OCI-LY7 (cell line): ENCODE measurements at regions of chrX and their contacts with region 1.

Region 1: GRCh38 chrX:51860679-51861078 is 32.7 kb upstream of the MAGED1 start:
- DNase-seq: peak; percentile 33
- H3K4me3 ChIP-seq: no peak overlapping the region
- H3K27ac ChIP-seq: no peak overlapping the region
- H3K4me1 ChIP-seq: no peaks in the 10 kb centered on the region
- CTCF ChIP-seq: peak; percentile 71

Region 2: GRCh38 chrX:51406688-51407461 is 453.8 kb before region 1 on chrX:
- CTCF ChIA-PET with region 1: no interaction called
- POLR2A ChIA-PET with region 1: no interaction called
- intact Hi-C with region 1: no loop called
- DNase-seq: no peak
- H3K4me3 ChIP-seq: no peak overlapping the region
- H3K27ac ChIP-seq: no peak overlapping the region
- H3K4me1 ChIP-seq: peaks cover 14% of the 10 kb centered on the region
- CTCF ChIP-seq: no peak

Region 3: GRCh38 chrX:51494409-51494808 is 366.3 kb before region 1 on chrX:
- CTCF ChIA-PET with region 1: no interaction called
- POLR2A ChIA-PET with region 1: no interaction called
- intact Hi-C with region 1: no loop called
- DNase-seq: peak; percentile 25
- H3K4me3 ChIP-seq: peak overlapping the region; percentile 76
- H3K27ac ChIP-seq: no peak overlapping the region
- H3K4me1 ChIP-seq: peaks cover 31% of the 10 kb centered on the region
- CTCF ChIP-seq: peak; percentile 71

Region 4: DNA sequence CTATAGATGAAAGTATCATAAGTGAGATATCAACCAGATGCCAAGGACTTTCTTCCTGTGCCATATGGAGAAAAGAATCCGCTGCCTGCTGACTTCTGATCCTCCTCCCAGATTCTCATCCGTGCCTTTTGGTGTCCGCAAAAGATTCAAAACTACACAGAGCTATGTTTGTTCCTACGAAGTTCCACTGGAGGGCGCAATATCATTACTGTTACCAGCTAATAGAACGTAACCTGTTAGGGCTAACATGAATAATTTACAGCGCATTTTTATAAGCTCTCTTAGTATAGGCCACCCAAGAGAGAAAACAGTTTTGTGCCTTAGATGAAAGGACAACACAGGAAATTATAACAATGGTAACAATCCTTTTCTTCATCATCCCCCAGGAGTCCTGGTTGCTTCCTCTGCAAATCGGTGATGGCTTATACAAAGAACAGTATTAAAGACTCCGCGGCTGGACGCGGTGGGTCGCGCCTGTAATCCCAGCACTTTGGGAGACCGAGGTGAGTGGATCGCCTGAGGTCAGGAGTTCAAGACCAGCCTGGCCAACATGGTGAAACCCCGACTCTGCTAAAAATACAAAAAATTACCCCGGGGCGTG is 219.2 kb before region 1 on chrX:
- CTCF ChIA-PET with region 1: no interaction called
- POLR2A ChIA-PET with region 1: no interaction called
- intact Hi-C with region 1: loop called (anchors 1 kb)
- DNase-seq: peak; percentile 47
- H3K4me3 ChIP-seq: no peak overlapping the region
- H3K27ac ChIP-seq: no peak overlapping the region
- H3K4me1 ChIP-seq: no peaks in the 10 kb centered on the region
- CTCF ChIP-seq: peak; percentile 78

Region 5: DNA sequence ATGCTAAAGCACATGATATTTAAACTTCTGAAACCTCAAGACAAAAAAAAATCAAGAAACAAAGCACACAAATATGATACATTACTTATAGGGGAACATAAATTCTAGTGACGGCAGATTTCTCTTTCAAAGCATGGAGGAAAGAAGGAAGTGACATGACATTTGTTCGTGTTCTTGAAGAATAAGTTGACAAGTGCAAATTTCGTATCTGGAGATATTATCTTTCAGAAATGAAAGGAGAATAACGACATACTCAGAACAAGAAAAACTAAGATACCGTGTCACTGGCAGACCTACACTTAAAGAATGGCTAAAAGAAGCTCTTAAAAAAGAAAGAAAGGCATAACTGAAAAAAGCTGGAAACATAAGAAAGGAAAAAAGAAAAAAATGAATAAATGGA is 194.7 kb before region 1 on chrX:
- CTCF ChIA-PET with region 1: no interaction called
- POLR2A ChIA-PET with region 1: no interaction called
- intact Hi-C with region 1: no loop called
- DNase-seq: no peak
- H3K4me3 ChIP-seq: no peak overlapping the region
- H3K27ac ChIP-seq: no peak overlapping the region
- H3K4me1 ChIP-seq: no peaks in the 10 kb centered on the region
- CTCF ChIP-seq: no peak

Region 6: GRCh38 chrX:51902510-51903050 is 41.9 kb after region 1 on chrX:
- CTCF ChIA-PET with region 1: no interaction called
- POLR2A ChIA-PET with region 1: no interaction called
- intact Hi-C with region 1: no loop called
- DNase-seq: no peak
- H3K4me3 ChIP-seq: no peak overlapping the region
- H3K27ac ChIP-seq: no peak overlapping the region
- H3K4me1 ChIP-seq: no peaks in the 10 kb centered on the region
- CTCF ChIP-seq: no peak